Naive thymus-derived CD4-positive, alpha-beta T cell (primary cell): ENCODE measurements at regions of chr10 and their contacts with region 1.

Region 1: DNA sequence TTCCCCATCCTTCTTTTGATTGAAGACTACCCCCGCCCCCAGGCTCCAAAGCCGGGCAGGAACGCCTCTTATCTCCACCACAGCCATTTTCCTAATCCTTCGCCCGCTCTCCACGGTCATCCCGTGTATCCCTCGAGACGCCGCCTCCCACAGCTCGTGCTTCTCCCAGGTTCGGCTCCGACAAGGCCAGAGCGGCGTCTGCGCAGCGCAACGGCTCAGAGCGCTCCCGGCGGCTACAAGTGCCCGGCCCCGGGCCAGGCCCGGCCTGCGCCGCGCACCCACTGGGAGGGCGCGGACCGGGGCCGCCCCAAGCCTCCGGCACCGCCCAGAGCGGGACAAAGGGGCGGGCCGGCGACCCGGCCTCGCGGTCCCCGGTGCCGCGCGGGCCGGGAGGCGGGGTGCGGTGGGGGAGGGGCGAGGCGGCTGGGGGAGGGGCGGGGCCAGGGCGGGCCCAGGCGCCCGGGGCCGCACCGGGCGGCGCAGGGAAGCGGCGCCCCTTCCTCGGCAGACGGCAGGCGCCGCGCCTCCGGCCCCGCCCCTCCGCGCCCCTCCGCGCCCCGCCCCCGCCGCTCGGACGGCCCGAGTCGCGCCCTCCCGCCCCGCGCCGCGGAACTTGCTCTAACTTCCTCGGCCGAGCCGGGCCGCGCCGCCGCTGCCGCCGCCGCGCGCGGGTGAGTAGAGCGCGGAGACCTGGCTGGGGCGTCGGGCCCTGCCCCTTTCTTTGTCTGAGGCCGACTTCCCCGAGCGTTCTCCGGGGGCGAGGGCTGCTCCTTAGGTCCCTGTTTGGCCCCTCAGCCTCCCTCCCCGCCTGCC is at the start of gene TSPAN14:
- DNase-seq: peak; percentile 49 to 83 (median 63)
- ATAC-seq: peak; percentile 84
- H3K4me3 ChIP-seq: peak within 1 kb of the TSS; percentile 87
- H3K4me3 Mint-ChIP-seq: peak within 1 kb of the TSS; percentile 79 to 99 (median 98)
- H3K27ac ChIP-seq: peak within 1 kb of the TSS; percentile 84
- H3K27ac Mint-ChIP-seq: peak within 1 kb of the TSS; percentile 87 to 99 (median 98)
- H3K4me1 ChIP-seq: peaks cover 23 to 27% of the 10 kb centered on the region in 2 donors
- H3K4me1 Mint-ChIP-seq: peaks cover 26 to 43% (median 38%) of the 10 kb centered on the region in 7 donors
- H3K27me3 ChIP-seq: no peaks in the 10 kb centered on the region
- H3K27me3 Mint-ChIP-seq: no peaks in the 10 kb centered on the region
- total RNA-seq, gene TSPAN14: 135 to 165 (median 160) TPM

Region 2: GRCh38 chr10:79038841-79039201 is 1415.1 kb before region 1 on chr10:
- CTCF ChIA-PET with region 1: no interaction called
- POLR2A ChIA-PET with region 1: no interaction called
- intact Hi-C with region 1: no loop called
- DNase-seq: no peak
- ATAC-seq: no peak
- H3K4me3 ChIP-seq: no peak overlapping the region
- H3K4me3 Mint-ChIP-seq: no peak overlapping the region
- H3K27ac ChIP-seq: no peak overlapping the region
- H3K27ac Mint-ChIP-seq: no peak overlapping the region
- H3K4me1 ChIP-seq: peaks cover 0 to 7% of the 10 kb centered on the region in 2 donors
- H3K4me1 Mint-ChIP-seq: peaks cover 14 to 36% (median 33%) of the 10 kb centered on the region in 7 donors
- H3K27me3 ChIP-seq: no peaks in the 10 kb centered on the region
- H3K27me3 Mint-ChIP-seq: peaks cover 0 to 41% (median 5%) of the 10 kb centered on the region in 5 donors

Region 3: GRCh38 chr10:80344276-80344675 is 109.6 kb before region 1 on chr10:
- CTCF ChIA-PET with region 1: no interaction called
- POLR2A ChIA-PET with region 1: no interaction called
- intact Hi-C with region 1: no loop called
- DNase-seq: no peak
- ATAC-seq: no peak
- H3K4me3 ChIP-seq: no peak overlapping the region
- H3K4me3 Mint-ChIP-seq: no peak overlapping the region
- H3K27ac ChIP-seq: no peak overlapping the region
- H3K27ac Mint-ChIP-seq: no peak overlapping the region
- H3K4me1 ChIP-seq: no peaks in the 10 kb centered on the region
- H3K4me1 Mint-ChIP-seq: no peaks in the 10 kb centered on the region
- H3K27me3 ChIP-seq: no peaks in the 10 kb centered on the region
- H3K27me3 Mint-ChIP-seq: peaks cover 0 to 8% (median 0%) of the 10 kb centered on the region in 5 donors

Region 4: DNA sequence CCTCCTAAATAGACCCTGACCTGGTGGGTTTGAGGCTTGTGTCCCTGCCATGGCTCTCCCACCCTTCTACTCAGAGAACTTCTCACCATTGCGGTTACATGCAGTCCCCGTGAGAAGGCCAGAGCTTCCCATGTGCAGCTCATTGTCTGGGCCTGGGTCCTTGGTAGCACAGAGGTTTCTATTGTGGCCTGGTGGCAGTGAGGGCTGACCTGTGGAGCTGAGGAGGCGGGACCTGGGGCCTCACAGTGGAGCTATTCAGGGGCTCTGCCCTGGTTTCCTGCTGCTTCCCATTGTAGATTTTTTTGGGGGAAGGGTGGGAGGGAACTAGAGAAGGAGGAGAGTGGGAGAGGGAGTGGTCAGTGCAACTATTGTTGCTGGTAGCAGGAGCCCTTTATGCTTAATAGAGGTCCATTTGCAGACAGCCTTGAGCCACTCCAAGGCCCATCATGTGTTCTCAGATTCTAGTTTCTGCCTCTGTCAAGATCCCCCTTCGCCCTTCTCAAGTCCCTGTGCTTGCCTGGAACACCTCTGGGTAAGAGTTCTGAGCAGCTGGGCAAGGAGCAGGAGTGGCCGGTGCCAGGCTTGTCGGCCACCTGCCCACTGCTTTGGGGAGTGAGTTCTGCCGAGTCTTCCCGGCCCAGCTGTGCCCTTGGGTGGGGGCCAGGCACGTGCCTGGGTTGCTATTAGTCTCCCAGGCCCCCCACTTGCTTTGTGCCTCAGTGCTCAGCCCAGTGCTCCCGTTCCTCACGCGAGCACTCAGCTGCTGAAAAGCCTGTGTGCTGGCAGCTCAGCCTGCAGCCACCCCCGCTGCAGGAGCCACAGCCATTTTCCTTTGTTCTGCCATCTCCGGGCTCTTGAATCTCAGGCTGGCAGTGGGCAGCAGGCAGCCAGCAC is 10.9 kb after region 1 on chr10:
- CTCF ChIA-PET with region 1: interaction called, 19 read pairs
- POLR2A ChIA-PET with region 1: interaction called, 318 read pairs
- intact Hi-C with region 1: loop called (anchors 1 kb)
- DNase-seq: peak in 2 of 9 donors; percentile 46 to 47
- ATAC-seq: peak; percentile 11
- H3K4me3 ChIP-seq: peak overlapping the region; percentile 57
- H3K4me3 Mint-ChIP-seq: peak overlapping the region; percentile 79 to 99 (median 88)
- H3K27ac ChIP-seq: peak overlapping the region; percentile 84
- H3K27ac Mint-ChIP-seq: peak overlapping the region; percentile 87 to 99 (median 98)
- H3K4me1 ChIP-seq: peaks cover 88 to 97% of the 10 kb centered on the region in 2 donors
- H3K4me1 Mint-ChIP-seq: peaks cover 75 to 100% (median 95%) of the 10 kb centered on the region in 7 donors
- H3K27me3 ChIP-seq: no peaks in the 10 kb centered on the region
- H3K27me3 Mint-ChIP-seq: no peaks in the 10 kb centered on the region

Region 5: DNA sequence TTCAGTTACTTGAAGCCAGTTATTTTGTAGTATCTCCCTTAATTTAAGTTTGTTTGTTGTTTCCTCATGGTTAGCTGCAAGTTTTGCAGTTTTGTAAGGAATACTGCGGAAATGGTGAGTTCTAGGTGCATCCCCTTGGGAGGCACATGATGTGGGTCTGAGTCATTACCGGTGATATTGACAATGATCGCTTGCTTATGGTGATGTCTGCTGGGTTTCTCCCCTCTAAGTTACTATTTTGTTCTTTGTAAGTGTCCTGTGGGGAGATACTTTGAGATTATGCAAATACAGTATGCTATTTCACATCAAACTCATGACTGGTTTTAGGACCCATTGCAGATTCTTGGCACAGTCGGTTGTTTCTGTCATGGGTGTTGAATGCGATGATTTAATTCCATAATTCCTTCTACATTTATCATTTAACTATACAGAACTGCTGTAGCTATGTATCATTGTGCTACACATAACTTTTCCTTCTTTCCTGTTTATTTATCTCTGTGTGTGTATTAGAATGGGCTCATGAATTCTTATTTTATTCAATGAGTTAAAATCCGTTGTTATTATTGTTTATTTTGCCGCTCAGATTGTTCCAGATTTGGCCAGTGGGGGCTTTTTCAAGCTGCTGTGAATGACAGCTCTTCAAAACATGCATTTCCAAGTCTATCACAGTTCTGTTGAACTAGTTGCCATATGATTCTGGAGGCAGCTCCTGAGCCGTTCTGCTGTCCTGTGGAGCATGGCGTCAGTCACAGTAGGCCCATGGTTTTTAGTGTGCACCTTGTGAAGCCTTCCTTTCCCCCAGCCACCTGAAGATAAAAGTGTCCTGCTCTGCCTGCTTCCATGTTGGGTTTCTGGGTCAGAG is 18.6 kb after region 1 on chr10:
- CTCF ChIA-PET with region 1: interaction called, 19 read pairs
- POLR2A ChIA-PET with region 1: interaction called, 318 read pairs
- intact Hi-C with region 1: loop called (anchors 1 kb)
- DNase-seq: peak in 1 of 9 donors; percentile 47
- ATAC-seq: peak; percentile 75
- H3K4me3 ChIP-seq: peak overlapping the region; percentile 46
- H3K4me3 Mint-ChIP-seq: peak overlapping the region; percentile 69 to 98 (median 84)
- H3K27ac ChIP-seq: peak overlapping the region; percentile 84
- H3K27ac Mint-ChIP-seq: peak overlapping the region; percentile 84 to 99 (median 92)
- H3K4me1 ChIP-seq: peaks cover 79 to 81% of the 10 kb centered on the region in 2 donors
- H3K4me1 Mint-ChIP-seq: peaks cover 64 to 98% (median 88%) of the 10 kb centered on the region in 7 donors
- H3K27me3 ChIP-seq: no peaks in the 10 kb centered on the region
- H3K27me3 Mint-ChIP-seq: no peaks in the 10 kb centered on the region

Region 6: GRCh38 chr10:80493522-80494051 is 39.7 kb after region 1 on chr10:
- CTCF ChIA-PET with region 1: interaction called, 839 read pairs
- POLR2A ChIA-PET with region 1: interaction called, 608 read pairs
- intact Hi-C with region 1: loop called in 1 of 2 experiments (anchors 1 kb)
- DNase-seq: peak in 6 of 9 donors; percentile 46 to 65 (median 52)
- ATAC-seq: peak; percentile 65
- H3K4me3 ChIP-seq: peak overlapping the region; percentile 2
- H3K4me3 Mint-ChIP-seq: peak overlapping the region; percentile 58 to 85 (median 74)
- H3K27ac ChIP-seq: peak overlapping the region; percentile 60
- H3K27ac Mint-ChIP-seq: peak overlapping the region; percentile 65 to 99 (median 87)
- H3K4me1 ChIP-seq: peaks cover 93 to 98% of the 10 kb centered on the region in 2 donors
- H3K4me1 Mint-ChIP-seq: peaks cover 89 to 100% (median 98%) of the 10 kb centered on the region in 7 donors
- H3K27me3 ChIP-seq: no peaks in the 10 kb centered on the region
- H3K27me3 Mint-ChIP-seq: no peaks in the 10 kb centered on the region

Region 7: GRCh38 chr10:80498833-80499741 is 45.2 kb after region 1 on chr10:
- CTCF ChIA-PET with region 1: interaction called, 839 read pairs
- POLR2A ChIA-PET with region 1: interaction called, 608 read pairs
- intact Hi-C with region 1: loop called (anchors 1 to 2 kb)
- DNase-seq: peak in 2 of 9 donors; percentile 32 to 61
- ATAC-seq: peak; percentile 73
- H3K4me3 ChIP-seq: peak overlapping the region; percentile 33
- H3K4me3 Mint-ChIP-seq: peak overlapping the region; percentile 76 to 92 (median 82)
- H3K27ac ChIP-seq: peak overlapping the region; percentile 59
- H3K27ac Mint-ChIP-seq: peak overlapping the region; percentile 85 to 99 (median 90)
- H3K4me1 ChIP-seq: peaks cover 93 to 99% of the 10 kb centered on the region in 2 donors
- H3K4me1 Mint-ChIP-seq: peaks cover 89 to 100% (median 98%) of the 10 kb centered on the region in 7 donors
- H3K27me3 ChIP-seq: no peaks in the 10 kb centered on the region
- H3K27me3 Mint-ChIP-seq: no peaks in the 10 kb centered on the region

Region 8: DNA sequence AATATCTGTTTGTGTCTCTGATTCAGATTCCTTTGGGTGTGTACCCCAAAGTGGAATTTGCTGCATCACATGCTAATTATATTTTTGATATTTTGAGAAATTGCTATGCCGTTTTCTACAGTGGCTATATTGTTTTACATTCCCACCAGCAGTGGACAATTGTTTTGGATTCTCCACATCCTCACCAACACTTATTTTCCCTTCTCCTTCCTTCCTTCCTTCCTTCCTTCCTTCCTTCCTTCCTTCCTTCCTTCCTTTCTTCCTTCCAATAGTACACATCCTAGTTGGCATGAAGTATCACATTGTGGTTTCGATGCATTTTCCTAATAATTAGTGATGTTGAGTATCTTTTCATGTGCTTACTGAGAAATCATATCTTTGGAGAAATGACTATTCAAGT is 619.2 kb after region 1 on chr10:
- CTCF ChIA-PET with region 1: no interaction called
- POLR2A ChIA-PET with region 1: no interaction called
- intact Hi-C with region 1: no loop called
- DNase-seq: no peak
- ATAC-seq: no peak
- H3K4me3 ChIP-seq: no peak overlapping the region
- H3K4me3 Mint-ChIP-seq: no peak overlapping the region
- H3K27ac ChIP-seq: no peak overlapping the region
- H3K27ac Mint-ChIP-seq: no peak overlapping the region
- H3K4me1 ChIP-seq: no peaks in the 10 kb centered on the region
- H3K4me1 Mint-ChIP-seq: no peaks in the 10 kb centered on the region
- H3K27me3 ChIP-seq: no peaks in the 10 kb centered on the region
- H3K27me3 Mint-ChIP-seq: peaks cover 0 to 8% (median under 1%) of the 10 kb centered on the region in 5 donors